ENCODE measurements at regions of chr1 and their contacts with region 1.

Region 1: GRCh38 chr1:64645741-64646140 is 99.1 kb upstream of the RAVER2 start:
- DNase-seq: no peak
- H3K4me3 ChIP-seq: no peak overlapping the region
- H3K27ac ChIP-seq: no peak overlapping the region
- H3K4me1 ChIP-seq: no peaks in the 10 kb centered on the region
- H3K27me3 ChIP-seq: no peaks in the 10 kb centered on the region
- CTCF ChIP-seq: no peak
- POLR2A ChIP-seq: no peak

Region 2: GRCh38 chr1:64624218-64624713 is 21.5 kb before region 1 on chr1:
- intact Hi-C with region 1: loop called (anchors 1 kb)
- DNase-seq: no peak
- H3K4me3 ChIP-seq: no peak overlapping the region
- H3K27ac ChIP-seq: peak overlapping the region in 1 of 2 donors; percentile 8
- H3K4me1 ChIP-seq: no peaks in the 10 kb centered on the region
- H3K27me3 ChIP-seq: no peaks in the 10 kb centered on the region
- CTCF ChIP-seq: no peak
- POLR2A ChIP-seq: no peak